SK-N-SH (cell line): ENCODE measurements at regions of chr6 and their contacts with region 1.

Region 1: GRCh38 chr6:154448448-154449096 is 61.9 kb downstream of the CNKSR3 start:
- DNase-seq: peak; percentile 78
- H3K4me3 ChIP-seq: peak overlapping the region; percentile 18 to 33; a peak in 3 of 4 replicates
- H3K27ac ChIP-seq: peak overlapping the region; percentile 89 to 99
- H3K4me1 ChIP-seq: peaks cover 23 to 41% of the 10 kb centered on the region in 2 experiments; a peak in 3 of 4 replicates
- H3K27me3 ChIP-seq: no peaks in the 10 kb centered on the region
- CTCF ChIP-seq: peak; percentile 46
- EP300 ChIP-seq: no peak; a peak in 1 of 4 replicates
- RAD21 ChIP-seq: peak; percentile 28; the same call in 1 of the 2 replicates

Region 2: DNA sequence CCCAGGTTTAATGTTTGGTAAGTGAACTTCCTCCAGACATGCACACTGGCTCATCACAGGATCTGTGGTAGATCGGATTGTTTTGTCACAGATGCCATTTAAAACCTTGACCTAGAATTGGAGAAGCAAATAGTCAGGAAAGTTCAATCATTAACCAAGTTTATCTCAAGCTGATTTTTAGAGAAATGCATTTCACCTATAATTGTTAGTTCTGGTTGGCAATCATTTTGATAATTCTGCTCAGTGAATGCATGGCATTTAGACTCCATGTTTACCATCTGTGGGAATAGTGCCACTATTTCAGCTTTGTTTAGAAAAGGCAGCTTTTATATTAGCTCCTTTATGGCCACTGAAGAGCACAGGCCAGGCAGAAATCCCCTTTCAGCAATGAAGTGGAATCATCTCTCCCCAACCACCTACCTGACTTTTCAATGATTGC is 18.1 kb before region 1 on chr6:
- CTCF ChIA-PET with region 1: interaction called, 27 read pairs
- POLR2A ChIA-PET with region 1: interaction called, 5 read pairs
- DNase-seq: no peak
- H3K4me3 ChIP-seq: no peak overlapping the region
- H3K27ac ChIP-seq: peak overlapping the region in 1 of 2 experiments; percentile 94; a peak in 2 of 4 replicates
- H3K4me1 ChIP-seq: peaks cover 25 to 41% of the 10 kb centered on the region in 2 experiments; a peak in 3 of 4 replicates
- H3K27me3 ChIP-seq: no peaks in the 10 kb centered on the region
- CTCF ChIP-seq: no peak
- EP300 ChIP-seq: no peak
- RAD21 ChIP-seq: no peak

Region 3: GRCh38 chr6:154783229-154783628 is 334.7 kb after region 1 on chr6:
- CTCF ChIA-PET with region 1: no interaction called
- POLR2A ChIA-PET with region 1: no interaction called
- DNase-seq: no peak
- H3K4me3 ChIP-seq: no peak overlapping the region
- H3K27ac ChIP-seq: no peak overlapping the region
- H3K4me1 ChIP-seq: no peaks in the 10 kb centered on the region
- H3K27me3 ChIP-seq: no peaks in the 10 kb centered on the region
- CTCF ChIP-seq: no peak
- EP300 ChIP-seq: no peak
- RAD21 ChIP-seq: no peak